ENCODE measurements at regions of chr2 and their contacts with region 1.

Region 1: GRCh38 chr2:88247531-88247930 is 77.4 kb downstream of the THNSL2 start:
- DNase-seq: no peak
- ATAC-seq: no peak
- H3K4me3 ChIP-seq: no peak overlapping the region
- H3K27ac ChIP-seq: no peak overlapping the region
- H3K4me1 ChIP-seq: no peaks in the 10 kb centered on the region
- H3K27me3 ChIP-seq: peaks cover 8% of the 10 kb centered on the region; the same call in 1 of the 2 replicates
- CTCF ChIP-seq: no peak

Region 2: GRCh38 chr2:88307817-88308216 is 60.3 kb after region 1 on chr2:
- CTCF ChIA-PET with region 1: no interaction called
- POLR2A ChIA-PET with region 1: no interaction called
- in situ Hi-C with region 1: no loop called
- intact Hi-C with region 1: loop called (anchors 2 kb)
- DNase-seq: peak; percentile 10
- ATAC-seq: peak; percentile 53; the same call in 1 of the 2 replicates
- H3K4me3 ChIP-seq: no peak overlapping the region
- H3K27ac ChIP-seq: no peak overlapping the region
- H3K4me1 ChIP-seq: no peaks in the 10 kb centered on the region
- H3K27me3 ChIP-seq: no peaks in the 10 kb centered on the region
- CTCF ChIP-seq: peak; percentile 75